SK-N-SH (cell line): ENCODE measurements at regions of chr5 and their contacts with region 1.

Region 1: DNA sequence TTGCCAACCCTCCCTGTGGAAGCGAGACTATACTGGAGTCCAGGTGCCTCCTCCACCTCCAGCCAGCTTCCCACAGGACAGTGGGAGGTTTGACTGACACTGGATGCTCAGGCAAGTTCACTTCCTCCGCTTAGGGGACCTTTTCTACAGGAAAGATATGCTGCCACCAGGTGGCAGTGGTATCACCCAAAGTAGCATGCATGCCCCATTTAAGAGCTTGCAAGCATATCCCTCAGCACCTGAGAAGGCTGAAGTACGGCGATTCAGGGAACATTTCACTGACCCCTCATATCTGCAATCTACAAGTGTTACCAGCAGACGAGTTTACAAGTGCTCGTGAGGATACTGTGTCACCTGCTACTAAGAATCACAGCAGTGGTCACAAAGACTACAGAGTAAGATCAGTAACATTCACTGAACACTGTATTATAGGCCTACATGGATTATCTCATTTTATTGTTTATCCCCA is 75.5 kb downstream of the KLHL3 start:
- DNase-seq: peak; percentile 64
- H3K4me3 ChIP-seq: no peak overlapping the region
- H3K27ac ChIP-seq: no peak overlapping the region
- H3K4me1 ChIP-seq: peaks cover 0 to 2% of the 10 kb centered on the region in 2 experiments; a peak in 1 of 4 replicates
- H3K27me3 ChIP-seq: no peaks in the 10 kb centered on the region
- CTCF ChIP-seq: peak; percentile 78
- EP300 ChIP-seq: no peak
- RAD21 ChIP-seq: peak; percentile 82

Region 2: DNA sequence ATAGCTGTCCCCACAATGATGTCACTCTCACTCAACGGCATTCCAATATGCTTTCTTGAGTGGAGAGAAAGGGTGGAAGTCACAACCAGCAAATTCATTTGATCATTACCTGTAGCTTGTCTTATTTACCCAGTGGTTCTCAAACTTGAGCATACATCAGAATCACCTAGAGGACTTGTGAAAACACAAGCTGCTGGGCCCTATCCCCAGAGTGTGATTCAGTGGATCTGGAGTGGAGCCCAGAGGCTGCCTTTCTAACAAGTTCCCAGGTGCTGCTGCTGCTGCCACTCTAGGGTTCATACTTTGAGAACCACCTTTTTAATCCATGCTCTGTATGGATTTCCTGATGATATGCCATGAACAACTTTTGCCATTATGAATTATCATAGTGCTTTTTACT is 19.2 kb before region 1 on chr5:
- CTCF ChIA-PET with region 1: interaction called, 143 read pairs
- POLR2A ChIA-PET with region 1: no interaction called
- DNase-seq: no peak
- H3K4me3 ChIP-seq: no peak overlapping the region
- H3K27ac ChIP-seq: no peak overlapping the region
- H3K4me1 ChIP-seq: no peaks in the 10 kb centered on the region
- H3K27me3 ChIP-seq: no peaks in the 10 kb centered on the region
- CTCF ChIP-seq: no peak
- EP300 ChIP-seq: no peak
- RAD21 ChIP-seq: no peak

Region 3: DNA sequence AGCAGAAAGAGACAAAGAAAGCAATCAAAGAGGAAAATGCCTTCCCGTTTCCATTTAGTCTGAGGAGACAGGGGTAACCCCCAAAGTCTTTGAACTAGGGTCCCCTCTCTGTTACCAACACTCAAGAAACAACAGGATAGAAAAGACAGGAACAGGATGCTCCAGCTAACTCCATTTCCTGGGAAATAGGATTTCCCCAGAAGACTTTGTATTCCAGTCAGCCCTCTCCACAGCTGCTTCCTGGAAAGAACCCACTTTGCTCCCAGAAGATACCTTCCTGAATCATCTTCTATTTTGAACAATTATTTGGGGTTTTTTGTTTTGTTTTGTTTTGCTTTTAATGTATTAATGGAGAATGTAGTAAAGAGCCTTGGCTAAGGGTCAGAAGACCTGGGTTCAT is 19.5 kb after region 1 on chr5:
- CTCF ChIA-PET with region 1: interaction called, 27 read pairs
- POLR2A ChIA-PET with region 1: no interaction called
- DNase-seq: no peak
- H3K4me3 ChIP-seq: no peak overlapping the region
- H3K27ac ChIP-seq: no peak overlapping the region
- H3K4me1 ChIP-seq: no peaks in the 10 kb centered on the region; a peak in 1 of 4 replicates
- H3K27me3 ChIP-seq: no peaks in the 10 kb centered on the region
- CTCF ChIP-seq: no peak
- EP300 ChIP-seq: no peak
- RAD21 ChIP-seq: no peak

Region 4: DNA sequence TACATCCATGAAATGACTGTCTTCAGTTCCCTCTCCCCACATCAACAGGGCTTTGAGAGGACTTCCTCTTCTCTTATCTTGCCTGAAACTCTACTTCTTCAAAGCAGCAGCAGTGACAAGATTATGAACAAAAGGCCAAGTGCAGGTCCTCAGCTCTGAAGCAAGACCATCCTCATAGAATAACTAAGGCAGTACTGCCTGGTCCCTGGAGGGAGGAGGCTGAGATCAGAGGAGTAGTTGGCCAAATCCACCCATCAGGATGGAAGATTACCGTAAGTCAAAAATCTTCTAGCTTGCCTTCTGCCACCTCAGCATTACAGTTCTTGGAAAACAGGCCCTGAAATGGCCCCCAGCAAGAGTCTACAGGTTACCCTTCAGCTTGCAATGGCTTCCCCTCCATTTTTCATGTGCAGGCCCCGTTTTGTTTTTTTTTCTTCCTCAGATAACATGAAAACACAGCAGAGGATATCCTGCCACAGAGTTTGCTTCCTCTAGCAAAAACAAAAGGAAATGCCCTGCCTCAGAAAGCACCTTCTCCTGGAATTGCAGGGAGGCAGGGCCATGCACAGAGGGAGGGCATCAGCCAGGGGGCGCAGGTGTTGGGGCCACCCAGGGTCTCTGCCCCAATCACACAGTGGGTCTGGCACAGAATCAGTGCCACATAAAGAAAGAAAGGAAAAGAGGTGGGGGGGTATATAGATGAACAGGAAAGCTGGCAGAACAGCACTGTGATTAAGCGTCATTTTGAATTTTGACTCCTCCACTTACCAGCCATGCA is 35.5 kb after region 1 on chr5:
- CTCF ChIA-PET with region 1: interaction called, 28 read pairs
- POLR2A ChIA-PET with region 1: no interaction called
- DNase-seq: no peak
- H3K4me3 ChIP-seq: no peak overlapping the region
- H3K27ac ChIP-seq: no peak overlapping the region
- H3K4me1 ChIP-seq: peaks cover 0 to 10% of the 10 kb centered on the region in 2 experiments; a peak in 1 of 4 replicates
- H3K27me3 ChIP-seq: no peaks in the 10 kb centered on the region
- CTCF ChIP-seq: no peak
- EP300 ChIP-seq: no peak
- RAD21 ChIP-seq: no peak

Region 5: GRCh38 chr5:137730336-137730735 is 70.0 kb after region 1 on chr5:
- CTCF ChIA-PET with region 1: interaction called, 239 read pairs
- POLR2A ChIA-PET with region 1: interaction called, 3 read pairs
- DNase-seq: no peak
- H3K4me3 ChIP-seq: no peak overlapping the region
- H3K27ac ChIP-seq: no peak overlapping the region
- H3K4me1 ChIP-seq: peaks cover 0 to 7% of the 10 kb centered on the region in 2 experiments; a peak in 1 of 4 replicates
- H3K27me3 ChIP-seq: no peaks in the 10 kb centered on the region
- CTCF ChIP-seq: no peak
- EP300 ChIP-seq: no peak
- RAD21 ChIP-seq: no peak

Region 6: DNA sequence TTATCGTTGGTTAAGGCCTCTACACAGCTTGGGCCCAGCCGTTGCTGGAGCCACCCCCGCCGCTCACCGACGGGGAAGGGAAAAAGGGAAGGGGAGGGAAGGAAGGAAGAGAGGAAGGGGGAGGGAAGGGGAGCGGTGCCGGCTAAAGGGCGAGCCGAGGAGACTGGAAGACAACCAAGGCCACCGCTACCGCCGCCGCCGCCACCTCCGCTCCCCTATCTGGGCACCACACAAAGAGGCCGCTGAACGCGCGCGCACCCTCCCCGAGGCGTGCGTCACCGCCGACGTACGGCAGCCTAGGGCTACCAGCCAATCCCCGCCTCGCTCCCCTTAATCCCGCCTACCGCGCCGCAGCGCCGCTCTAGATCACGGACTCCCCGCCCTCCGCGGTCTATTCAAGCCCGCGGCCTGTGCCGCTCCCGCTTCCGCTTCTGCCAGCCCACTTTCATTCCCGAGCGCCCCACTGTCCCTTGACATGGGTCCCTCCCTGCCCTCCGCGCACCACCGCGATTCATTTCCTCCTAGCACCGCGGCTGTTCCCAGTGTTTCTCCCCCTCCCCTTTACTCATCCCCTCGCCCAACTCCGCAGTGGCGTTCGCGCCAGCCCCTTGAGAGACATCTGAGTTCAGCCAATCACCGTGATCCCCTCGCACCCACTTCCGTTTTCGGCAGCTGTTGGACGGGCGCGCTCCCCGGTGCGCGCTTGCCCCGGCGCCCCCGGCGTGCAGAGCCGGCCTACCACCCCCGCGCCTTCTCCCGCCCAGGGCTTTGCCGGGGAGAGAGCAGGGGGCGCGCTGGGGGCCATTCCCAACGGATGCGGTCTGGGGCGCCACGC is 94.0 kb after region 1 on chr5 and contains the start of gene HNRNPA0:
- CTCF ChIA-PET with region 1: interaction called, 12 read pairs
- POLR2A ChIA-PET with region 1: interaction called, 4 read pairs
- DNase-seq: peak; percentile 97
- H3K4me3 ChIP-seq: peak within 1 kb of the TSS; percentile 93 to 94
- H3K27ac ChIP-seq: peak within 1 kb of the TSS; percentile 97
- H3K4me1 ChIP-seq: peaks cover 0 to 6% of the 10 kb centered on the region in 2 experiments; a peak in 2 of 4 replicates
- H3K27me3 ChIP-seq: no peaks in the 10 kb centered on the region
- CTCF ChIP-seq: no peak
- EP300 ChIP-seq: peak; percentile 97 to 99
- RAD21 ChIP-seq: no peak
- polyA plus RNA-seq, gene HNRNPA0: 19.2 and 24.9 TPM in 2 replicates

Region 7: GRCh38 chr5:137858223-137858916 is 198.0 kb after region 1 on chr5:
- CTCF ChIA-PET with region 1: no interaction called
- POLR2A ChIA-PET with region 1: no interaction called
- DNase-seq: no peak
- H3K4me3 ChIP-seq: no peak overlapping the region
- H3K27ac ChIP-seq: no peak overlapping the region
- H3K4me1 ChIP-seq: no peaks in the 10 kb centered on the region; a peak in 1 of 4 replicates
- H3K27me3 ChIP-seq: no peaks in the 10 kb centered on the region
- CTCF ChIP-seq: no peak
- EP300 ChIP-seq: no peak
- RAD21 ChIP-seq: no peak